Activated CD4-positive, alpha-beta memory T cell treated with anti-CD3 and anti-CD28 coated beads for 36 hours (primary cell): ENCODE measurements at regions of chr11 and their contacts with region 1.

Region 1: DNA sequence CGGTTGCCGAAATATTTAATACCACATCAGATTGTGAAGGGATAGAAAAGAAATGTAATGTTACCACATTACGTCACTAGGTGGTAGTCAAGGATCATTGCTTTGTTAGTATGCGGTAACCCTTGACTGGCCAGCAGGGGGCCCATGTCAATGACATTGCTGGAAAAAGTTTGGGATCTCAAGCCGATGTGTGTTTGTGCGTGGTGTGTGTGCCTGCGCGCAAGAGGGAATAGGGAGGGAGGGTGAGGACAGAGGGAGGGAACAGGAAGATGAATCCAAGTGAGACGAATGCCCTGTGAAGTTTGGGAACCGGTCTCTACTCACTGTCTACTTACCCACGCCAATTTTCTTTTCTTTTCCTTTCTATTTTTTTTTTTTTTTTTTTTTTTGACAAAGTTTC is 10.7 kb upstream of the MRGPRX2 start:
- DNase-seq: peak; percentile 69
- H3K4me3 Mint-ChIP-seq: peak overlapping the region; percentile 19
- H3K27ac Mint-ChIP-seq: no peak overlapping the region
- H3K4me1 Mint-ChIP-seq: peaks cover 4% of the 10 kb centered on the region
- H3K27me3 Mint-ChIP-seq: peaks cover 3% of the 10 kb centered on the region

Region 2: GRCh38 chr11:19060629-19061028 is 10.6 kb before region 1 on chr11 and contains the start of gene MRGPRX2:
- CTCF ChIA-PET with region 1: interaction called, 32 read pairs
- POLR2A ChIA-PET with region 1: interaction called, 3 read pairs
- intact Hi-C with region 1: no loop called
- DNase-seq: peak; percentile 61
- H3K4me3 Mint-ChIP-seq: no peak within 1 kb of the TSS
- H3K27ac Mint-ChIP-seq: peak within 1 kb of the TSS; percentile 24
- H3K4me1 Mint-ChIP-seq: peaks cover 21% of the 10 kb centered on the region
- H3K27me3 Mint-ChIP-seq: no peaks in the 10 kb centered on the region
- total RNA-seq, gene MRGPRX2: not detected

Region 3: DNA sequence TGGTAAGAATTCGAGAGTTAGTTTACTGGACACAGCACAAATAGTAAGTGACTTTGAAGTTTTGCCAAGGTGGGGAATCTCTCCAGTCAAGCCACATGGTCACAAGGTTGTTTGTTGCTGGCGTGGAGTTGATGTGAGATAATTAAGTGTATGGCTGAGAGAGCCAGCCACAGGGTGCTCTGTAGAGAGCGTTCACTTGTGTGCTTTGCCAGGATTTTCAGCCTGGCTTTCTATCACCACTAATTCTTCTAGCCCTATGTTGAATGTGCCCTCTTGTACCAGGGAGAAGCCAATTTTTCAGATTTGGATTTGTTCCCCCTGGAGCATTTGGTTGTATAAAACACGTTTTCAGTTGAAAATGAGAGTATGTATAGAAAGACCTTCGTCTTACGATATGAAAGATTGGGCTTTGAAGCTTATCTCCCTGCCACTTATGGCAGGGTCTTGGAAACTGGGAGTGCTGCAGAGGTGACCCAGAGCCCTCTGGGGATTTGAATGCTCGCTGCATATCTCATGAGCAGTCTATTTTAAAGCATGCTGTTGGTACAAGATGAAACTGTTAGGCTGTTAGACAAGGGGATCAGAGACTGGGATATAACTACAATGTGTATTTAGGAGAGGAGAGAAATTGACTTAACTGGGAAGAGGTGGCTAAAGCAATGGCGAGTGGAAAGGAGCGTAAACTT is 101.9 kb after region 1 on chr11:
- CTCF ChIA-PET with region 1: no interaction called
- POLR2A ChIA-PET with region 1: no interaction called
- intact Hi-C with region 1: loop called (anchors 10 kb)
- DNase-seq: no peak
- H3K4me3 Mint-ChIP-seq: no peak overlapping the region
- H3K27ac Mint-ChIP-seq: no peak overlapping the region
- H3K4me1 Mint-ChIP-seq: no peaks in the 10 kb centered on the region
- H3K27me3 Mint-ChIP-seq: no peaks in the 10 kb centered on the region

Region 4: GRCh38 chr11:19259487-19260345 is 188.5 kb after region 1 on chr11:
- CTCF ChIA-PET with region 1: interaction called, 14 read pairs
- POLR2A ChIA-PET with region 1: no interaction called
- intact Hi-C with region 1: loop called (anchors 2 kb)
- DNase-seq: peak; percentile 76
- H3K4me3 Mint-ChIP-seq: no peak overlapping the region
- H3K27ac Mint-ChIP-seq: no peak overlapping the region
- H3K4me1 Mint-ChIP-seq: no peaks in the 10 kb centered on the region
- H3K27me3 Mint-ChIP-seq: no peaks in the 10 kb centered on the region

Region 5: DNA sequence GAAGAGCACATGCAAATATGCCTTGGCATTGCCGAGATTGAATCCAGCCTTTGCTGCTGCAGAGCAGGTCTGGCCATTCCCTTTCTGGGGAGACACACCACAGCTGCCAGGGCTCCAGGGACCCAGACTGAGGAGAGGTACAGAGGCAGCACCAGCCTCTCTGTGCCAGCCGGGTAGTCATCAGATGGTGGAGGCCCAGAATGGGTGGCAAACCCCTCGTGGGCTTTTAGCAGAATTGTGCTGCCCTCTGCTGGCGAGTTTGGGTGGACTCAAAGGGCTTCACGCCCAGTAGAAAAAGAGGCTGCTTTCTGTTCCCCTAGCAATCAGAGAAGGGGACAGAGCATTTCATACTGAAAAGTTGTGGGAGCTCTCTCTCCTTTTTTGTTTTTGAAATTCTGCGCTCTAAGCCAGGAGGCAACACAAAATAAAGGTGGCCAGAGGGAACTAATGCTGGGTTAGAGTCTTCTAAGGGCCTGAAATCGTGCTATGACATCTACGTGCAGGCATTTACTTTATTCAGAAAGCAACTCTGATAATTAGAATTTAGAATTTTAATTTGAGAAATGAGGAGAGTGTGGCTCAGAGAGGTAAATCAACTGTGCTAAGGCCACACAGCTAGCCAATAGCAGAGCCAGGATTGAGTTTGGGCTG is 482.6 kb after region 1 on chr11:
- CTCF ChIA-PET with region 1: interaction called, 44 read pairs
- POLR2A ChIA-PET with region 1: no interaction called
- intact Hi-C with region 1: loop called (anchors 1 kb)
- DNase-seq: peak; percentile 82
- H3K4me3 Mint-ChIP-seq: no peak overlapping the region
- H3K27ac Mint-ChIP-seq: no peak overlapping the region
- H3K4me1 Mint-ChIP-seq: no peaks in the 10 kb centered on the region
- H3K27me3 Mint-ChIP-seq: peaks cover 6% of the 10 kb centered on the region